B cell (primary cell): ENCODE measurements at regions of chr19 and their contacts with region 1.

Region 1: DNA sequence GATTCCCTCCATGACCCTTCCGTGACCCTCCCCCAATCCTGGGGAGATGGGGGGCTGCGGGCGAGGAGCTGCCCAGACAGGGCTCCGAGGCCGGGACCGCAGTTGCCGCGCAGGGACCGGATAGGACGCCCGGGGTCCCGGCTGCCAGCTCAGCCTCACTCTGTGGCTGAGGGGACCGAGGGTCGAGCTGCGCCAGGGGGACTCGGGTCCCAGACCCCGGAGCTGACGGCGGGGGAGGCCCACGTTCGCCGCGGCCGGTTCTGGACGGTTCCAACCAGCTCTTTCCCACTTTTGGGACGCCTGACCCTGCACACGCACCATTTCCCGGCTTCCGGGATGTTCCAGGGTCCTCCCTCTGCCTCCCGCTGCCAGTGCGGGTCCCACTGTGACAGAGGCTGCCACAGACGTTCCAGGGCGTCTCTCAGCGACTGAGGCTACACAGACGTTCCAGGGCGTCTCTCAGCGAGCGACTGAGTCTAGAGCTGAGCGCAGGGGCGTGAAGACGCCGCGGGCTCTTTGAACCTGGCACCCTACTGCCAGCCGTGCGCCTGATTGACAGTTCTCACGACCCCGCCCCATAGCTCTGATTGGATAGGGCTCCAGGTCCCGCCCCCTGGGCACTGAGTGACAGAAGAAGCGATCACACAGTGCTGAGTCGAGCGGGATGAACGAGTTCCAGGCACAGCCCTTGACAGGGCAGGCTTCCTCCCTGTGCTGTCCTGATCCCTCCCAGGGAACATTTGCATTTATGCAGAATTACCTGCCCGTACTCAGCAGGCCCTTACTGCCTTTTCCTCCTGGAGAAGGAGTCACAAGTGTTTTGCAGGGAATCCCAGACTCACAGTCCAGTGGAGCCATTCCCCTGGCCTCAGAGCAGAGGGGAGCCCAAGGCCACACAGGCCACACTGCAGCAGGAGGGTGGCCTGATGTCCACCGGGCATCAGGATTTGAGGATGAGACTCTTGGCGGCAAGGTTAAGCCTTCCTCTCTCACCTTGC is at the start of gene ZNF563:
- DNase-seq: peak; percentile 95
- ATAC-seq: peak; percentile 92
- H3K4me3 ChIP-seq: peak within 1 kb of the TSS; percentile 53 to 97 (median 83)
- H3K4me3 Mint-ChIP-seq: peak within 1 kb of the TSS; percentile 88
- H3K27ac ChIP-seq: peak within 1 kb of the TSS; percentile 76 to 86
- H3K27ac Mint-ChIP-seq: peak within 1 kb of the TSS; percentile 95
- H3K4me1 ChIP-seq: peaks cover 30 to 35% of the 10 kb centered on the region in 2 donors
- H3K4me1 Mint-ChIP-seq: peaks cover 37% of the 10 kb centered on the region
- H3K27me3 ChIP-seq: no peaks in the 10 kb centered on the region
- H3K27me3 Mint-ChIP-seq: no peaks in the 10 kb centered on the region
- CTCF ChIP-seq: no peak
- total RNA-seq, gene ZNF563: 6.1 and 7.3 TPM in 2 replicates

Region 2: DNA sequence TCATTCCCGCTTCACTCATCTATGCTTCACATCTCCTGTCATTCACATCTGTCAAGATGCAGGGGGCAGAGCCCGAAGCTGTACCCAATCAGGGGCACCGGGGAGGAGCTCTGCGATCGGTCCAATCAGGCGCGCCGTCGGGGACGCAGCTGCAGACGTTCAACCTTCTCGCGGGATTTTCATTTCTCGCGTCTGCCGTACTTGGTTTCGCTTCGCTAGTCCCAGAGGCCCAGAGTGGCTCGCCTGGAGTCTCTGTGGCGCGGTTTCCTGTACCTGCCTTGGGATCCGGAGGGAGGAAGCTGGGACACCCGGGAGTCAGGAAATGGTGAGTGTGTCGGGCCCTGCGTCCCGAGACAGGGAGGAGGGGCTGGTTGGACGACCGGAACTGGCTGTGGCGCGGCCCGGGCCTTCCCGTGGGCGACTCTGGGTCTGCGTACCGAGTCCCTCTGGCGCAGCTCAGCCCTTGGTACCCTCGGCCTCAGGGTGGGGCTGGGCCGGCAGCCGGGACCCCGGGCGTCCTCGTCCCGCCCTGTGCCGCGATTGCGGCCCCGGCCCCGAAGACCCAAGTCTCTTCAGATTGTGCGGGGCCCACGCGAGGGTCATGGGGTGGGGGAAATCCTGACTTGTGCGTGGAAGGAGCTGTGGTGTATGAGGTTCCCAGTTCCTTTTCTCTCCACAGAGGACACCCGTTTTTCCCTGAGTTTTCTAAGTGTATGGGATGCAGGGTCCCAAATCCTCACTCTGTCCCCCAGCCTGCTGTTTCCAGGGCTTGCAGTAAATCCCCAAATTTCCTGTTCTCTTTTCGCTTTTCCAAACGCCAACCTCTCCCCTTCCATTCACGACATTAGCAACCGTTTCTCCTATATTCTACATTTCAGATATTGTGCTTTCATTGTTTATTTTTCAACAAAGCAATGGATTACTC is 170.3 kb before region 1 on chr19 and contains the start of gene ZNF136:
- CTCF ChIA-PET with region 1: interaction called, 3 read pairs
- POLR2A ChIA-PET with region 1: interaction called, 9 read pairs
- intact Hi-C with region 1: loop called (anchors 2 kb)
- DNase-seq: peak; percentile 94
- ATAC-seq: peak; percentile 99
- H3K4me3 ChIP-seq: peak within 1 kb of the TSS; percentile 58 to 96 (median 91)
- H3K4me3 Mint-ChIP-seq: peak within 1 kb of the TSS; percentile 92
- H3K27ac ChIP-seq: peak within 1 kb of the TSS; percentile 96 to 99
- H3K27ac Mint-ChIP-seq: peak within 1 kb of the TSS; percentile 99
- H3K4me1 ChIP-seq: peaks cover 10 to 15% of the 10 kb centered on the region in 2 donors
- H3K4me1 Mint-ChIP-seq: peaks cover 34% of the 10 kb centered on the region
- H3K27me3 ChIP-seq: no peaks in the 10 kb centered on the region
- H3K27me3 Mint-ChIP-seq: no peaks in the 10 kb centered on the region
- CTCF ChIP-seq: no peak
- total RNA-seq, gene ZNF136: 30.8 and 33.5 TPM in 2 replicates

Region 3: DNA sequence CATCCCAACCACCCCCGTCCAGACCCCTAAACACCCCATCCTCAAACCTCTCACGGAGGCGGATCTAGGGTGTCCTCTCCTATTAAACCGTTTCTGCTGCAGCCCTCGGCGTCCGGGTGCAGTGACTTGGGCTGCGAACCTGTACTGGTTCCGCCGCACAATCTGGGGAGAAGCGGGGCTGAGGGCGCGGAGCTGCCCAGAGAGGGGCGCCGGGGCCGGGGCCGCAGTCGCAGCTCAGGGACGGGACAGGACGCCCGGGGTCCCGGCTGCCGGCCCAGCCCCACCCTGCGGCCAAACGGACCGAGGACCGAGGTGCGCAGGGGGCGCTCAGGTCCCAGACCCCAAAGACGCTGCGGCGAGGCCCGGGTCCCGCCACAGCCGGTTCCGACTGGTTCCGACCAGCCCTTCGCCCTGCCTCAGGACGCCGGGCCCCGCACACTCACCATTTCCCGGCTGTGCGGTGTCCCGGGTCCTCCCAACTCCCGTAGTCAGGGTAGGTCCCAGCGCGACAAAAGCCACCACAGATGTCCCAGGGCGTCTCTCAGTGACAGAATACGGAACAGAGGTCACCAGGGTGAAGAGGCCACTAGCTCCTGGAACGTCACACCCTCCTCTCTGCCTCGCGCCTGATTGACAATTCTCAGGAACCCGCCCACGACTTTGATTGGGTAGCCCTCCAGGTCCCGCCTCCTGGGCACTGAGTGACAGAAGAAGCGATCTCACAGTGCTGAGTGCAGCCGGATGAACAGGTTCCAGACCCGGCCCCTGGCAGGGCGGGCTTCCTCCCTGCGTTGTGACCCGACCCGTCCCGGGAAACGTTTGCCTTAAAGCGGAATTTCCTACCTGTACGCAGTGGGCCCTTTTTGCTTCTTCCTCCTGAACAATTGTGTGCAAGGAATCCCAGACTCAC is 39.0 kb before region 1 on chr19 and contains the start of gene ZNF44:
- CTCF ChIA-PET with region 1: interaction called, 3 read pairs
- POLR2A ChIA-PET with region 1: interaction called, 21 read pairs
- intact Hi-C with region 1: loop called (anchors 1 kb)
- DNase-seq: peak; percentile 95
- ATAC-seq: peak; percentile 96
- H3K4me3 ChIP-seq: peak within 1 kb of the TSS; percentile 57 to 96 (median 91)
- H3K4me3 Mint-ChIP-seq: peak within 1 kb of the TSS; percentile 99
- H3K27ac ChIP-seq: peak within 1 kb of the TSS; percentile 82 to 89
- H3K27ac Mint-ChIP-seq: peak within 1 kb of the TSS; percentile 94
- H3K4me1 ChIP-seq: peaks cover 8 to 17% of the 10 kb centered on the region in 2 donors
- H3K4me1 Mint-ChIP-seq: peaks cover 31% of the 10 kb centered on the region
- H3K27me3 ChIP-seq: no peaks in the 10 kb centered on the region
- H3K27me3 Mint-ChIP-seq: no peaks in the 10 kb centered on the region
- CTCF ChIP-seq: no peak
- total RNA-seq, gene ZNF44: 27.8 and 28.0 TPM in 2 replicates

Region 4: GRCh38 chr19:12346896-12347295 is 13.4 kb after region 1 on chr19:
- CTCF ChIA-PET with region 1: interaction called, 4 read pairs
- POLR2A ChIA-PET with region 1: no interaction called
- intact Hi-C with region 1: loop called (anchors 2 kb)
- DNase-seq: peak; percentile 61
- ATAC-seq: peak; percentile 36
- H3K4me3 ChIP-seq: no peak overlapping the region
- H3K4me3 Mint-ChIP-seq: no peak overlapping the region
- H3K27ac ChIP-seq: no peak overlapping the region
- H3K27ac Mint-ChIP-seq: no peak overlapping the region
- H3K4me1 ChIP-seq: no peaks in the 10 kb centered on the region
- H3K4me1 Mint-ChIP-seq: no peaks in the 10 kb centered on the region
- H3K27me3 ChIP-seq: no peaks in the 10 kb centered on the region
- H3K27me3 Mint-ChIP-seq: no peaks in the 10 kb centered on the region
- CTCF ChIP-seq: peak; percentile 47

Region 5: DNA sequence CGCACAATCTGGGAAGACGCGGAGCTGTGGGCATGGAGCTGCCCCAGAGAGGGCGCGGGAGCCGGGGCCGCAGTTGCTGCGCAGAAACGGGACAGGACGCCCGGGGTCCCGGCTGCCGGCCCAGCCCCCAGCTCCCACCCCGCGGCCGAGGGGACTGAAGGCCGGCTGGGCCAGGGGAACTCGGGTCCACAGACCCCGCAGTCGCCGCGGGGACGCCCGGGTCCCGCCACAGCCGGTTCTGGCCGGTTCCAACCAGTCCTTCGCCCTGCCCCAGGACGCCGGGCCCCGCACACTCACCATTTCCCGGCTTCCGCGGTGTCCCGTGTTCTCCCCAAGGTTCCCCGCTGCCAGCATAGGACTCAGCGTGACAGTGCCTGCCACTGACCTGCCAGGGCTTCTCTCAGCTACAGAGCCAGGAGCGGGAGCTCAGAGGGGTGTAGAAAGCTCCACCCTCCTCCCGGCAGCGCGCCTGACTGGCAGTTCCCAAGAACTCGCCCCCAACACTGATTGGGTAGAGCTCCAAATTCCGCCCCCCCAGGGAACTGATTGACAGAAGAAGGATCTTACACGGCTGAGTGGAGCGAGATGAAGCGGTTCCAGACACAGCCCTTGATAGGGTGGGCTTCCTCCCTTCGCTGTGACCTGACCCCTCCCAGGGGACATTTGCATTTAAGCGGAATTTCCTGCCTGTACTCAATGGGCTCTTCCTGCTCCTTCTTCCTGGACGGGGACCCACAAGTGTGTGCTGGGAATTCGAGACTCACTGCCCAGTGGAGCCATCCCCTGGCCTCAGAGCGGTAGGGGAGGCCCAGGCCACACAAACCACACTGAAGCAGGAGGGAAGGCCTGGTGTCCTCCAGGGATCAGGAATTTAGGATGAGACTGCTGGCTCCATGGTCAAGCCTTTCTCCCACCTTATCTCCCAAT is 32.0 kb after region 1 on chr19 and contains the start of gene ZNF442:
- CTCF ChIA-PET with region 1: interaction called, 3 read pairs
- POLR2A ChIA-PET with region 1: interaction called, 10 read pairs
- intact Hi-C with region 1: loop called (anchors 1 kb)
- DNase-seq: peak; percentile 86
- ATAC-seq: peak; percentile 97
- H3K4me3 ChIP-seq: peak within 1 kb of the TSS; percentile 24 to 85 (median 82)
- H3K4me3 Mint-ChIP-seq: peak within 1 kb of the TSS; percentile 98
- H3K27ac ChIP-seq: peak within 1 kb of the TSS; percentile 49 to 67
- H3K27ac Mint-ChIP-seq: peak within 1 kb of the TSS; percentile 93
- H3K4me1 ChIP-seq: peaks cover 7 to 16% of the 10 kb centered on the region in 2 donors
- H3K4me1 Mint-ChIP-seq: peaks cover 27% of the 10 kb centered on the region
- H3K27me3 ChIP-seq: no peaks in the 10 kb centered on the region
- H3K27me3 Mint-ChIP-seq: no peaks in the 10 kb centered on the region
- CTCF ChIP-seq: peak; percentile 24
- total RNA-seq, gene ZNF442: 6.9 and 8.4 TPM in 2 replicates

Region 6: GRCh38 chr19:12400633-12401502 is 67.4 kb after region 1 on chr19 and contains the start of gene ZNF799:
- CTCF ChIA-PET with region 1: no interaction called
- POLR2A ChIA-PET with region 1: interaction called, 3 read pairs
- intact Hi-C with region 1: loop called (anchors 1 kb)
- DNase-seq: peak; percentile 89
- ATAC-seq: peak; percentile 91
- H3K4me3 ChIP-seq: peak within 1 kb of the TSS; percentile 61 to 93 (median 90)
- H3K4me3 Mint-ChIP-seq: peak within 1 kb of the TSS; percentile 91
- H3K27ac ChIP-seq: peak within 1 kb of the TSS in 1 of 2 donors; percentile 68
- H3K27ac Mint-ChIP-seq: peak within 1 kb of the TSS; percentile 85
- H3K4me1 ChIP-seq: peaks cover 4 to 7% of the 10 kb centered on the region in 2 donors
- H3K4me1 Mint-ChIP-seq: peaks cover 20% of the 10 kb centered on the region
- H3K27me3 ChIP-seq: no peaks in the 10 kb centered on the region
- H3K27me3 Mint-ChIP-seq: no peaks in the 10 kb centered on the region
- CTCF ChIP-seq: no peak
- total RNA-seq, gene ZNF799: 10.5 and 11.1 TPM in 2 replicates

Region 7: GRCh38 chr19:12440541-12441316 is 107.3 kb after region 1 on chr19 and contains the start of gene ZNF443:
- CTCF ChIA-PET with region 1: no interaction called
- POLR2A ChIA-PET with region 1: interaction called, 4 read pairs
- intact Hi-C with region 1: loop called (anchors 2 kb)
- DNase-seq: peak; percentile 97
- ATAC-seq: peak; percentile 97
- H3K4me3 ChIP-seq: peak within 1 kb of the TSS; percentile 57 to 91 (median 86)
- H3K4me3 Mint-ChIP-seq: peak within 1 kb of the TSS; percentile 99
- H3K27ac ChIP-seq: peak within 1 kb of the TSS; percentile 47 to 68
- H3K27ac Mint-ChIP-seq: peak within 1 kb of the TSS; percentile 92
- H3K4me1 ChIP-seq: peaks cover 3 to 10% of the 10 kb centered on the region in 2 donors
- H3K4me1 Mint-ChIP-seq: peaks cover 24% of the 10 kb centered on the region
- H3K27me3 ChIP-seq: no peaks in the 10 kb centered on the region
- H3K27me3 Mint-ChIP-seq: no peaks in the 10 kb centered on the region
- CTCF ChIP-seq: no peak
- total RNA-seq, gene ZNF443: 5.5 and 6.2 TPM in 2 replicates